Colonic mucosa (tissue), 4 donors: ENCODE measurements at regions of chr13 and their contacts with region 1.

Region 1: GRCh38 chr13:30802953-30803478 is 67.7 kb downstream of the ALOX5AP start:
- DNase-seq: peak; percentile 87
- H3K4me3 ChIP-seq: no peak overlapping the region
- H3K27ac ChIP-seq: no peak overlapping the region
- H3K4me1 ChIP-seq: no peaks in the 10 kb centered on the region
- H3K27me3 ChIP-seq: no peaks in the 10 kb centered on the region
- CTCF ChIP-seq: peak; percentile 95

Region 2: DNA sequence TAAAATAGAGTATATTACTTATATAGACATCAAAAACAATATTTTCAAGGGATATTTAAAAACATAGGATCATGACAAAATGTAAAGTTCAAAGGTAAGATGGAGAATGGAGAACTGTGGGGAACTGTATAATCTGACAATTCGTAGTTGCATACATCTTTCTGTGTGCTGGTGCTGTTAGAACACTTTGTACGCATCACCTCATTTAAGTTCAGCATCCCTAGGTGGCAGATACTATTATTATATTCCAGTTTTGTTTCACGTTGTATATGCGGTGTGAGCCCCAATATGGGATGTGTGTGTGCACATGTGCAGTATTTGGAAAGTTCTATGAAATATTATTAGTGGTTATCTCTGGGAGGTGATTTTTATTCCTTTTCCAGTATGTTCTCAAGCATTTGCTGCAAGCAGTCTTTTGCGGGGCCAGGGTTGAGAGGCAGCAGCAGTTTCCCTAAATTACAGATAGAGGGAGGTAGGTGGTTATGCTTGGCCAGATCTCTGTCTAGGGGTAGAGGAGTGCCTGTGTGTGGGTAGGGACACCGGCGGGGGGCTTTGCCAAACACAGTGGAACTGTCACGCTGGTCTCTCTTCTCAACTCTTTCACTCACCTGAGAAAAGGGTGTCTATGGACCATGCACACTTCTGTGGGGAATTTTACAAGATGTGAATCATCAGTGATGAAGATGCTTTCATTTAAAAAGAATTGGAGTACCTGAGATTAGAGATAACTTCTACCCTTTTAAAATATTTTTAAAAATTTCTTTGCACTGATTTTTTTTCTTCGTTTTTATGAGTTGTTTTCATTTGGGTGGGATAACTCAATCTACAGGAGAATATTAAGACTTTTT is 123.3 kb before region 1 on chr13:
- intact Hi-C with region 1: loop called (anchors 5 kb)
- DNase-seq: no peak
- H3K4me3 ChIP-seq: no peak overlapping the region
- H3K27ac ChIP-seq: no peak overlapping the region
- H3K4me1 ChIP-seq: no peaks in the 10 kb centered on the region
- H3K27me3 ChIP-seq: no peaks in the 10 kb centered on the region
- CTCF ChIP-seq: no peak

Region 3: DNA sequence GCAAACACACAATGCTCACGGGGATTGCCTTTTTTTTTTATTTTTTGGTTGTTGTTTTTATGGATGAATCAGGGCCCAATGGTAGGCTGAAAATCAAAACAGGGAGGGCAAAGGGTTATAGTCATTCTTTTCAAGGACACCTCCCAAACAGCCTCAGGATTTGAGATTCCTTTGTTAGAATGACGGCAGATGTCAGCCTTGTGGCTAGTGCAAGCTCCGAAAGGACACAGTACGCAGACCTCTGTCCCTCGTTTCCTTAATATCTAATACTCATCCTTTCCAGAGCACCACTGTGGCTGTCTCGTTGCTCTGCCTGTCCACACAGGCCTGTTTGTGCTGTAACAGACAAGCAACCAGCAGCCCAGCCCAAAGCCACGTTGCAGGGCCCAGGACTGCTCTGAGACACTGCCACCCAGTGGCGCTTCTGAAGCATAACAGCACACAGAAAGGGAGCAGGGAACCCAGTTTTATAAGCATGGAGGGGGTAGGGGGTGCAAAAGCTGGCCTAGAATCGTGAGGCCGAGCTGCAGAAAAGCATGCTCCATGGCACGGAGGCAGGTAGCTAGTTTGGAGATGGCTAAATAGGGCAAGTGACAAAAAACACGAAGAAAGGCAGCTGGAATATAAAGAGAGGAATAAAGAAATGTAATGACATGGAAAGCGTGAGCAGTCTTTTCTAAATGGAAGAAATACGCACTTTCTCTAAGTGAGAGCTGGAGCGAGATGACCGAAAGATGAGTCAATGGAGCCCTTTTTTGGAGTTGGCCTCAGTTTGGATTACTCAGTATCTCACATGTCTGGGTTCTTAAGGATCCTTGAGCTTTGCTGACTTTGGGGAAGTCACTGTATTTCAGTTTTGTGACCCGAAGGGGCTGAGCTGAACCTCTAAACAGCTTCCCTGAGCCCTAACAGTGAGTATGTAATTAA is 62.4 kb after region 1 on chr13:
- intact Hi-C with region 1: loop called (anchors 2 kb)
- DNase-seq: peak; percentile 72
- H3K4me3 ChIP-seq: no peak overlapping the region
- H3K27ac ChIP-seq: peak overlapping the region; percentile 63
- H3K4me1 ChIP-seq: no peaks in the 10 kb centered on the region
- H3K27me3 ChIP-seq: no peaks in the 10 kb centered on the region
- CTCF ChIP-seq: peak; percentile 90